ENCODE measurements at regions of chr1 and their contacts with region 1.

Region 1: GRCh38 chr1:98870959-98871903 is 133.4 kb downstream of the PLPPR5 start:
- DNase-seq: peak in 9 of 10 donors; percentile 15 to 91 (median 75)
- ATAC-seq: peak; percentile 95 to 96
- H3K4me3 Mint-ChIP-seq: peak overlapping the region; percentile 75 to 89 (median 82)
- H3K27ac Mint-ChIP-seq: peak overlapping the region; percentile 86 to 97 (median 94)
- H3K4me1 Mint-ChIP-seq: peaks cover 20 to 42% (median 30%) of the 10 kb centered on the region in 4 donors
- H3K27me3 Mint-ChIP-seq: no peaks in the 10 kb centered on the region

Region 2: DNA sequence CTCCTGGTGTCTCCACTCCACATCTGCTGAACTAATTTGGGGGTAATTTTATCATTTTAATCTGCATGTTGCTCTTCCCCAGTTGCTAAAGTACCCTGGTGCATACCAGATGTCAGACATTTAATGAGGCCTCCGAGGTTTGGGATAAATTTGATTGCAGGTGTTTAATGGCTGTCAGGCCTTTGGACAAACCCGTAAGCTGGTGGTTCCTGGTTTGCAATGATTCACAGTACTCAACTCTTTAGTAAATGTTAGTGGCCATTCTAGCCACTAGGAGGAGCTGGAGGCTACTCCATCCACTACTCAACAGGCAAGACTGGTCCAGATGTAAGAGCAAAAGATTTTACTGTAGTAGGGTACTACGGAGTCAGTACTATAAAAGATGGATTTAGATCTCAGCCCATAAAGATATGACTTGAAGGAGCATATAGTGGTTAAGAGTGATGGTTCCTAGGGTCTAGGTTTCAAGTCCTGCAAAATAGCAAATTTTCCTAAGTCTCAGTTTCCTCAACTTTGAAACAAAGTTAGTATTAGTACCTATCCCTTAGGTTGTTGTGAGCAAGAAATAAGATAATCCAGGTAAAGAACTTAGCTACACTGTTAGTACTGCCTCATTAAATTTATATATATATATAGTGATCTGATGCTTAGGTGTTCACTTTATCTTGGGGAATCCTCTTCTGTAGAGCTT is 76.9 kb before region 1 on chr1:
- POLR2A ChIA-PET with region 1: interaction called, 10 read pairs
- DNase-seq: peak in 9 of 10 donors; percentile 18 to 75 (median 58)
- ATAC-seq: peak; percentile 87 to 90
- H3K4me3 Mint-ChIP-seq: no peak overlapping the region
- H3K27ac Mint-ChIP-seq: peak overlapping the region in 2 of 10 donors; percentile 21 to 28
- H3K4me1 Mint-ChIP-seq: peaks cover 15 to 39% (median 22%) of the 10 kb centered on the region in 4 donors
- H3K27me3 Mint-ChIP-seq: peaks cover 0 to 3% (median 0%) of the 10 kb centered on the region in 5 donors

Region 3: DNA sequence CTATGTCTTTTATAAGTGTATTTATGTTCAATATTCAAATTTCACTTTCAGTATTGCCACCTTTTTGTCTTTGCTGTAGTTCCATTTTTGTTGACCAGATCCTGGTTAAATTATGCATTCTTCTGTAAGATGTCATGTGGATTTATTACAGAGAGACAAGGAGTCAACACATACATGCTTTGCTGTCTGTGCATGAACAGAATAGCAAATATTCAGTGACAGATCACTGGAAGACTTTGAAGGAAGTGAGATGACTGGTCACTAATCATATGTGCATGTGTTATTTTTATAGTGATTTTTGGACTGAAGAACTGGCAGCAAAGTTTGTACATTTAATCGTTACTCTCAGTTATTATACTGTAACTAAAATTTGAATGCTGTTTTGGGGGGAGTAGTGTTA is 16.3 kb after region 1 on chr1:
- POLR2A ChIA-PET with region 1: no interaction called
- DNase-seq: no peak
- ATAC-seq: no peak
- H3K4me3 Mint-ChIP-seq: no peak overlapping the region
- H3K27ac Mint-ChIP-seq: peak overlapping the region in 1 of 10 donors; percentile 17
- H3K4me1 Mint-ChIP-seq: peaks cover 0 to 31% (median 7%) of the 10 kb centered on the region in 4 donors
- H3K27me3 Mint-ChIP-seq: no peaks in the 10 kb centered on the region

Region 4: GRCh38 chr1:98991127-98992012 is 120.1 kb after region 1 on chr1:
- POLR2A ChIA-PET with region 1: no interaction called
- DNase-seq: no peak
- ATAC-seq: peak in 1 of 2 donors; percentile 23
- H3K4me3 Mint-ChIP-seq: no peak overlapping the region
- H3K27ac Mint-ChIP-seq: peak overlapping the region in 1 of 10 donors; percentile 54
- H3K4me1 Mint-ChIP-seq: peaks cover 4 to 9% (median 7%) of the 10 kb centered on the region in 4 donors
- H3K27me3 Mint-ChIP-seq: peaks cover 0 to 2% (median 0%) of the 10 kb centered on the region in 5 donors

Measured in naive thymus-derived CD8-positive, alpha-beta T cell (primary cell).